Right ventricle myocardium superior (tissue), 1 donor: ENCODE measurements at regions of chr12 and their contacts with region 1.

Region 1: DNA sequence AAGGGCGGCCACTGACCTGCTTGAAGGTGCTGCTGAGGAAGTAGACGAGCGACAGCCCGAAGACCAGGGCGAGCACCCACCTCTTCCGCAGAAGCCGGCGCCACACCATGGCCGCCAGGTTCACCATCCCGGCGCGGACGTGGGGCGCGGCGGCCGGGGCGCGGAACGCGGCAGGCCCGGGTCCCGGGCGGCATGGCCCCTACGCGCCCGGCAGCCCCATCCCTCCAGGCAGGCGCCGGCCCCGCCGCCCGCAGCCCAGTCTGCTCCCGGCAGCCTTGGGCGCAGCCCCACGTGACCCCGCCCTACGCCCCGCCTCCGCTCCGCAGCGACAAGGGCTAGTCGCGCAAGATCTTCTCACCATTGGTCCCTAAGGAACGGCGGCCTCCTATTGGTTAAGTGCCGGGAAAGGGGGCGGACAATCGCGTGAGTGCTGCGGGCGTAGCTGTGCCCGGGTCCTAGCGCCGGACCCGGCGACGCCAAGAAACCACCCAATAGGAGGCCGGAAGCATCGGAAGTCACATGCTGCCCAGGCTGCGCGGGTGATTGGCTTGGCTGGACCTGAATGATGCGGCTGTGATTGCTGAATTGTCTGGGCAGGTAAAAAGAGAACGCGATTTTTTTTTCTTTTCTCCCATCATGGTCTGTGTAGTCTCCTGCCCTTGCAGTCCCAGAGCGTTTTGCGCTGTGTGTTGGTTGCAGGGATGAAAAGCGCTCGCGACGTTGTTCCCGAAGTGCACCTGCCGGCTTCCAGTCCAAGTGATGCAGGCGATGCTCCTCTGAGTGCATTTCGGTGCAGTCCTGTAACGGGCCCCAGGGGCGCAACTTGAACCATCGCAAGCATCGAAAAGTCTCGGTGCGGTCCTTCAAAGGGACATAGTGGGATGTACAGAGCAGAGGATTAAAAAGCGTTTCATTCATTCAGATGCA is at the starts of genes RNFT2 and SPRING1:
- DNase-seq: peak; percentile 99
- ATAC-seq: peak; percentile 100
- total RNA-seq, gene RNFT2: 0.62 TPM
- total RNA-seq, gene SPRING1: 8.0 TPM

Region 2: DNA sequence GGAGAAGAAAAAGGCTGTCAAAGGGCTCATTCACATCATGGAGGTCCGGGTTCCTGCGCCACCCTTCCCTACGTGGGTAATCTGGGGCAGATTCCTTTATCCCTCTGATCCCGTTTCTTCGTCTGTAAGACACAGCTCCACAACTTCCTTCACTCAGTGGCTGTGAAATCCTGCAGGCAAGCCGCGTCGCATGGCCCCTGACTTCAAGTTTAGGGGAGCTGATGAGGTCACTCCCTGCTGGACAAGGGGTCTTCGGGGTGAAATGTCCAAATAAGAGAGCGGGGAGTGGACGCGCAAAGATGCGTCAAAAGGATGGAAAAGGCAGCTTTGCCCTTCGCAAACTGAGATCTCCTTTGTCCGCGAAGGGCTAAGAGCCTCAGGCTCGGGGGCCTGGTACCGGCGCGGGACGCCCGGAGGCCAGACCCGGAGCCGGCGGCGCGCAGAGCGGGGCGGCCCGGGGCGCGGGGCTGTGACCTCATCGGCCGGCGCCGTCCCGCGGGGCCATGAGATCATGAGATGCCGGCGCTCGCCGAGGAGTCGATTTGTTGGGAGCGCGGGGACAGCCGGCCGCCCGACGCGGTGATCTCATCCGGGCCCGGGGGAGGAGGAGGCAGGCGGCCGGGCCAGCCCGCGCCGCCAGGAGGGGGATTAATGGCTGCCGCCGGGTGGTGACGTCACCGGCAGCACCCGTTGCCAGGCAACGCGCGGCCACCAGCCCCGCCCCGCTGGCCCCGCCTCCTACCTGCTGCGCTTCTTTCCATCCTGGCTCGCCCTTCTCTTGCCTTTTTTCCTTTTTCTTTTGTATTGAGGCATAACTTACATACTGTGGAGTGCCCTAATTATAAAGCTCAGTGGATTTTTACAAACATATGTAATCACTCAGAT is 81.2 kb after region 1 on chr12:
- intact Hi-C with region 1: loop called (anchors 5 kb)
- DNase-seq: peak; percentile 93
- ATAC-seq: peak; percentile 98